Psoas muscle (tissue), 8 donors: ENCODE measurements at regions of chr17 and their contacts with region 1.

Region 1: DNA sequence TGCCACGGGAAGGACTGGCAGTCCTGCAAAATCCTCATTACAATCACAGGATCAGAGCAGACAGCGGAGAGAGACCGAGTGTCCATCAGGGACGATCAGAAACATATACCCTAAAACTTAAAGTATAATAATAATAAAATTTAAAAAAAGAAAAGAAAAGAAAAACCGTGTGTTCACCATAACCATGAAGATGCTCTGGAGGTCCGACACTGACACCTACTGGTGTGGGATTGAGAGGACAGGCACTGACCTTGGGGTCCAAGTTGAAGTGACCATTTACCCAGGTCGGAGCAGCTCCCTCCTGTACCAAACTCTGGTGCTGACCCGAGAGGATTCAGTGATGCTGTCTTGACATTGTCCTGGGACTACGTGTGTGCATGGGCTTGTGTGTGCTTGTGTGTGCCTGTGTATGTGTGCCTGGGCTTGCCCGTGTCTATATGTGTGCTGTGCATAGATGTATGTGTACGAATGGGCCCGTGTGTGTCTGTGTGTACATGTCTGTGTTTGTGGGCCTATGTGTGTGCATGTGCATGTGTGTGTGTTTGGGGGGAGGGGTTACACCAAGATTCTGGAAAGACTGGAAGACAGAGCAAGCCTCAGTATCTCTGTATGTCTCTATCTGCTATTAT is 10.0 kb upstream of the CD300LD start:
- DNase-seq: no peak
- ATAC-seq: peak; percentile 53 to 71 (median 65)
- H3K4me3 ChIP-seq: no peak overlapping the region
- H3K27ac ChIP-seq: no peak overlapping the region
- H3K4me1 ChIP-seq: no peaks in the 10 kb centered on the region
- H3K27me3 ChIP-seq: peaks cover 0 to 9% (median 0%) of the 10 kb centered on the region in 3 donors
- CTCF ChIP-seq: peak; percentile 64

Region 2: GRCh38 chr17:74493381-74493833 is 108.7 kb before region 1 on chr17:
- intact Hi-C with region 1: no loop called
- DNase-seq: peak; percentile 61 to 81
- ATAC-seq: peak; percentile 89 to 98 (median 96)
- H3K4me3 ChIP-seq: no peak overlapping the region
- H3K27ac ChIP-seq: peak overlapping the region; percentile 4
- H3K4me1 ChIP-seq: peaks cover 14% of the 10 kb centered on the region
- H3K27me3 ChIP-seq: no peaks in the 10 kb centered on the region
- CTCF ChIP-seq: peak; percentile 95

Region 3: DNA sequence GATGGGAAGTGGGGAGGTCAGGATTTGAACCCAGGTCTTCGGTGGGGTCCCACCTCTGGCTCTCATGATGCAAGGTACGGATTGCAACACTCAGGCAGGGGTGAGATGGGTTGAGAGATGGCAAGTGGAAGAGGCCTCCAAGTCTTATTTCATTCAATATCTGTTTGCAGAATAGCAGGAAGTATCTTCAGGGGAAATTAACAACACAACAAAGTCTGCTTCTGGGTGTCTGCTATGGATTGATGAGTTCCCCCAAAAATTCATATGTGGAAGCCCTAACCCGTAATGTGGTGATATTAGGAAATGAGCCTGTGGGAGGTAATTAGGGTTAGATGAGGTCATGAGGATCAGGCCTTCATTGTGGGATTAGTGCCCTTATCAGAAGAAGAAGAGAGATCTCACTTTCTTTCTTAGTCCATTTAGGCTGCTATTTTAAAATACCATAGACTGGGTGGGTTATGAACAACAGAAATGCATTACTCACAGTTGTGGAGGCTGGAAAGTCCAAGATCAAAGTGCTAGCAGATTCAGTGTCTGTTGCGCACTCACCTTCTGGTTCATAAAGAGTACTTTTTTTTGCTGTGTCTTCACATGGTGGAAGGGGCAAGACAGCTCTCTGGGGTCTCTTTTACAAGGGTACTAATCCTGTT is 30.3 kb before region 1 on chr17:
- intact Hi-C with region 1: loop called in 1 of 2 experiments (anchors 1 kb)
- DNase-seq: no peak
- ATAC-seq: no peak
- H3K4me3 ChIP-seq: no peak overlapping the region
- H3K27ac ChIP-seq: no peak overlapping the region
- H3K4me1 ChIP-seq: no peaks in the 10 kb centered on the region
- H3K27me3 ChIP-seq: no peaks in the 10 kb centered on the region
- CTCF ChIP-seq: no peak

Region 4: GRCh38 chr17:74646231-74646630 is 44.2 kb after region 1 on chr17:
- intact Hi-C with region 1: no loop called
- DNase-seq: no peak
- ATAC-seq: no peak
- H3K4me3 ChIP-seq: no peak overlapping the region
- H3K27ac ChIP-seq: no peak overlapping the region
- H3K4me1 ChIP-seq: no peaks in the 10 kb centered on the region
- H3K27me3 ChIP-seq: peaks cover 2 to 25% (median 4%) of the 10 kb centered on the region in 3 donors
- CTCF ChIP-seq: no peak